ENCODE measurements at regions of chr20 and their contacts with region 1.

Region 1: DNA sequence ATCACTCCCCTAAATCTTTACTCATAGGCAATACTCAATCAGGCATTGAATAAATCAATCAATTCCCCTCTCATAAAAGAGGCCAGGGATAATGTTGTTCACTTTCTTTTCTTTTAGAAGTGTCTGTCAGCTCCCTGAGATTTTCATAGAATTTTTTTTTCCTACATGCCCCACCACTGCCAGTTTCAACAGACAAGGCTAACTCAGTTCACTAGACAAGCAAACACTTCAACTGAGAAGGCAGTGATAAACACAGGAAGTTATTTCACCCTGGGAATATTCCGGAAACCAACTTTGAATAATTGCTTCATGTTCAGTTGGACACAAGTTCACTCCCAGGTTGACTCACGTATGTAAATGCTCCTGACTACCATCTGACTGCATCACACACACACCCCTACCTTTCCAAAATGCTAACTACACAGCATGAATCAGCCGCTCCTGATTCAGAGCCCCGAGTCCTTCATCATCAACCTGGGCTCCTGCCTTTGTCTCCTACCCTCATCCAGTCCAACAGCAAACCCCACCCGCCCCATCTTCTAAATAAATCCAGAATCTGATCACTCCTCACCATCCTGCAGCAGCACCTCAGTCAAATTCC is 143.9 kb downstream of the BCAS1 start:
- DNase-seq: peak; percentile 99
- ATAC-seq: peak; percentile 80
- H3K4me3 ChIP-seq: peak overlapping the region; percentile 52
- H3K27ac ChIP-seq: peak overlapping the region; percentile 85
- H3K4me1 ChIP-seq: peaks cover 87% of the 10 kb centered on the region
- H3K27me3 ChIP-seq: no peaks in the 10 kb centered on the region
- CTCF ChIP-seq: no peak
- EP300 ChIP-seq: peak; percentile 80 to 82
- POLR2A ChIP-seq: peak; percentile 67
- RAD21 ChIP-seq: no peak

Region 2: GRCh38 chr20:53786445-53787267 is 139.9 kb before region 1 on chr20:
- CTCF ChIA-PET with region 1: no interaction called
- POLR2A ChIA-PET with region 1: no interaction called
- RAD21 ChIA-PET with region 1: no interaction called
- SMC1A ChIA-PET with region 1: no interaction called
- in situ Hi-C with region 1: no loop called
- intact Hi-C with region 1: no loop called
- DNase-seq: no peak
- ATAC-seq: no peak; the same call in 2 of the 3 replicates
- H3K4me3 ChIP-seq: no peak overlapping the region
- H3K27ac ChIP-seq: no peak overlapping the region
- H3K4me1 ChIP-seq: peaks cover 12% of the 10 kb centered on the region
- H3K27me3 ChIP-seq: no peaks in the 10 kb centered on the region
- CTCF ChIP-seq: no peak
- EP300 ChIP-seq: no peak
- POLR2A ChIP-seq: no peak
- RAD21 ChIP-seq: no peak

Region 3: GRCh38 chr20:53891306-53891944 is 35.1 kb before region 1 on chr20:
- CTCF ChIA-PET with region 1: no interaction called
- POLR2A ChIA-PET with region 1: interaction called, 3 read pairs
- RAD21 ChIA-PET with region 1: interaction called, 8 read pairs
- SMC1A ChIA-PET with region 1: interaction called, 11 read pairs
- in situ Hi-C with region 1: no loop called
- intact Hi-C with region 1: no loop called
- DNase-seq: no peak
- ATAC-seq: no peak
- H3K4me3 ChIP-seq: no peak overlapping the region
- H3K27ac ChIP-seq: no peak overlapping the region
- H3K4me1 ChIP-seq: peaks cover 25% of the 10 kb centered on the region
- H3K27me3 ChIP-seq: no peaks in the 10 kb centered on the region
- CTCF ChIP-seq: no peak
- EP300 ChIP-seq: no peak
- POLR2A ChIP-seq: no peak
- RAD21 ChIP-seq: no peak

Region 4: DNA sequence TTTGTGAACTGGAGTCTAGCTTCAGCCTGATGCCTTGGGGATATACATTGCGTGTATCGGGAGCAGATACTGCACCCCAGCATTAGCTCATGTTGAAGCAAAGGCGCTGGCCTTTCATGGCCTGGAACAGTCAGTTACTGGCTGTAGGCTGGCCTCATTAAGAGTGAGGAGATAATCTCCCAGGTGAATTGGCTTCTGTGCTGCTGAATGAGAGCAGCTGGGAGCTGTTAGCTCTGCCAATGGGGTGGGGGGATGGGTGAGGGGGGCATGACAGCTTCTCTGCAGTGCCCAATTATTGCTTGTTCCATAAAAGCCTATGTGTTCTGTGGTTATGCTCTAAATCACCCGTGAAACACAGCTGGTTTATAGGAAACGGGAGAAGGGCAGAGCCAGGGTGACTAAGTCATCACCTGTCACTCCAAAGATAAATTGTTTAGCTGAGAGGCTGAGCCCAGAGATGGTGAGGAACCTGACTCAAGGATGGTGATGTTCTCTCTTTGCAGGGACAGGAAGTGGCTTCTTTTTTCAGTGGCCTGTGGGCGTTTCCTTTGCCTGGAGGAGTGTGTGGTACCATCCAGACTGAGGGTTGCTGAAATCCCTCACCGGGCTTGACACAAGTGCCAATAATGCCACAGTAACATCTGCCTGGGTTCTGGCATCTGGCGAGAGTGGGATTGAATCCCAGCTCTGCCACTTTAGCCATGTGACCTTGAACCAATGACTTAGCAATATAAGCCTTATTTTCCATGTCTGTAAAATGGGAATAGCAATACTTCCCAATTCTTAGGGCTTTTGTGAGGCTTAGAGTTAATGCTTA is 27.0 kb before region 1 on chr20:
- CTCF ChIA-PET with region 1: interaction called, 7 read pairs
- POLR2A ChIA-PET with region 1: interaction called, 6 read pairs
- RAD21 ChIA-PET with region 1: interaction called, 9 read pairs
- SMC1A ChIA-PET with region 1: interaction called, 49 read pairs
- in situ Hi-C with region 1: no loop called
- intact Hi-C with region 1: no loop called
- DNase-seq: peak; percentile 95
- ATAC-seq: peak; percentile 88
- H3K4me3 ChIP-seq: no peak overlapping the region
- H3K27ac ChIP-seq: peak overlapping the region; percentile 62
- H3K4me1 ChIP-seq: peaks cover 39% of the 10 kb centered on the region
- H3K27me3 ChIP-seq: no peaks in the 10 kb centered on the region
- CTCF ChIP-seq: no peak
- EP300 ChIP-seq: peak in 1 of 2 experiments; percentile 74; a peak in 2 of 4 replicates
- POLR2A ChIP-seq: no peak
- RAD21 ChIP-seq: no peak

Region 5: GRCh38 chr20:53905019-53905847 is 21.3 kb before region 1 on chr20:
- CTCF ChIA-PET with region 1: interaction called, 7 read pairs
- POLR2A ChIA-PET with region 1: interaction called, 4 read pairs
- RAD21 ChIA-PET with region 1: interaction called, 10 read pairs
- SMC1A ChIA-PET with region 1: interaction called, 49 read pairs
- in situ Hi-C with region 1: no loop called
- intact Hi-C with region 1: no loop called
- DNase-seq: no peak
- ATAC-seq: peak; percentile 51
- H3K4me3 ChIP-seq: 0 out of 2 replicates have a peak overlapping the region, but pooled peaks have one; percentile 15
- H3K27ac ChIP-seq: peak overlapping the region; percentile 72
- H3K4me1 ChIP-seq: peaks cover 43% of the 10 kb centered on the region
- H3K27me3 ChIP-seq: no peaks in the 10 kb centered on the region
- CTCF ChIP-seq: no peak
- EP300 ChIP-seq: peak in 1 of 2 experiments; percentile 50; a peak in 1 of 4 replicates
- POLR2A ChIP-seq: no peak
- RAD21 ChIP-seq: no peak

Region 6: DNA sequence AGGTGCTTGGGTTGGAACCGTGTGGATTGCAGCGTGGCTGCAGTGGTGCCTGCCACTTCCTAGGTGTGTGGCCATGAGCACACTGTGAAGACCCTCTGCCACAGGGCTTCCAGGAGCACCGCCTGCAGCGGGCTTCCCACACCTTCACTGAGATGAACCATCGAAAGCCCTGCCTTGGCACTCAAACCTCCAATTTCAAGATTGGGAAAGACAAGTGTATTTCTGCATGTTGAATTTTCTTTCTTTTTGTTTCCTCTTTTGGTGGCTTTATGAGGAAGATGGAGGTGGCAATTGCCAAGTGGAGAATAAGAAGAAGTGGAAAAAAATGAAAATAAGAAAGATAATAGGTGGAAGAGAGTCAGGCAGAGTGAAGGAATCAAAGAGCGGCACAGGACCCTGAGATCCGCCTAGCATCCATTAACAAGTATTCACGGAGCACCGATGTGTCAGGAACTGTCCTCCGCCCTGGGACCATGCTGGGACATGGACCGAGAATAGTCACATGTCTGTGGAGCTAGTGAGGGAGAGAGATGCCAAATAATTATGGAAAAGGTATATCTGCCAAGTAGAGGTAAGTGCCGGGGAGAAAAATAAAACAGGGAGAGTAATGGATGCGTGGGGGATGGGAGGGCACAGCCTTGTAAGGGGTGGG is 16.1 kb before region 1 on chr20:
- CTCF ChIA-PET with region 1: interaction called, 258 read pairs
- POLR2A ChIA-PET with region 1: interaction called, 20 read pairs
- RAD21 ChIA-PET with region 1: interaction called, 394 read pairs
- SMC1A ChIA-PET with region 1: interaction called, 384 read pairs
- in situ Hi-C with region 1: no loop called
- intact Hi-C with region 1: no loop called
- DNase-seq: no peak
- ATAC-seq: no peak
- H3K4me3 ChIP-seq: no peak overlapping the region
- H3K27ac ChIP-seq: no peak overlapping the region
- H3K4me1 ChIP-seq: peaks cover 27% of the 10 kb centered on the region
- H3K27me3 ChIP-seq: no peaks in the 10 kb centered on the region
- CTCF ChIP-seq: no peak
- EP300 ChIP-seq: no peak
- POLR2A ChIP-seq: no peak
- RAD21 ChIP-seq: no peak

Region 7: DNA sequence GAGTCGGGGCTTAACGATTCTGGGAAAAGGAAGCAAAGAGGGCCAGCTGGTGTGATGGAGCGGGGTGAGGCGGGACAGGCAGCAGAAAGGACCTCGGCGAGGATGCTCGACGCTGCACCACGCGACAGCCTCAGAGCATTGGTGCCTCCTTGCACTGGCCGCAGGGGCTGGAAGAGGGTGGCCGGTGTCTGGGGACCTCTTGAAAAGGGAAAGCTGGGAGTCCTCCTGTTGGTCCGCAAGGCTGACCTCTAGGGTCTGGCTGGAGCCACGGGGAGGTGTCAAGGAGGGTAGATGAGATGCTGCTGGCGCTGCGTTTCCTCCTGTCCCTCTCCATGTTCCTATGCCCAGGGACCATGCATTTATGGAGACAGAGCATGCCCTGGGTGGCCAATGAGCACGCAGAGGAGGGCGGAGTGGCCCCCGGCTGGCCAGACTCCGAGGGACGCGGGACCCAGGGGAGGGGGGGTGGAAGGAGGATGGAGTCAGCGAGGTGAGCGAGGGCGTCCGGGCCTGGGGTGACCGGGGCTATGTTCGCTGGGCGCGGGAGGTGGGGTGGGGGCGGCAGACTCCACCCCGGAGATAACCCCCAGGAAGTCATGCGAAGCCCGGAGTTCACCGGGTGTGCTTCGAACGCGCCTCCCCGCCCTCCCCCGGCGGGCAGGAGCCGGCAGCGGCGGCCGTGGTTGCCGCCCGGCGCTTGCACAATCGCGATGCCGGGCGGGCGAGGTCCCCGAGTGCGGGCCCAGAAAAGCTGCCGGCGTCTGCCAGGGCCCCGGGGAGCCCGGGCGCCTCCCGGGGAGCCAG is 247.3 kb after region 1 on chr20 and contains the start of gene CYP24A1:
- CTCF ChIA-PET with region 1: no interaction called
- POLR2A ChIA-PET with region 1: no interaction called
- RAD21 ChIA-PET with region 1: no interaction called
- SMC1A ChIA-PET with region 1: no interaction called
- in situ Hi-C with region 1: no loop called
- intact Hi-C with region 1: no loop called
- DNase-seq: no peak
- ATAC-seq: no peak
- H3K4me3 ChIP-seq: no peak within 1 kb of the TSS
- H3K27ac ChIP-seq: no peak within 1 kb of the TSS
- H3K4me1 ChIP-seq: no peaks in the 10 kb centered on the region
- H3K27me3 ChIP-seq: peaks cover 13 to 27% of the 10 kb centered on the region in 2 experiments
- CTCF ChIP-seq: no peak
- EP300 ChIP-seq: no peak
- POLR2A ChIP-seq: no peak
- RAD21 ChIP-seq: no peak
- polyA plus RNA-seq, gene CYP24A1: not detected